ENCODE measurements at regions of chr1 and their contacts with region 1.

Region 1: DNA sequence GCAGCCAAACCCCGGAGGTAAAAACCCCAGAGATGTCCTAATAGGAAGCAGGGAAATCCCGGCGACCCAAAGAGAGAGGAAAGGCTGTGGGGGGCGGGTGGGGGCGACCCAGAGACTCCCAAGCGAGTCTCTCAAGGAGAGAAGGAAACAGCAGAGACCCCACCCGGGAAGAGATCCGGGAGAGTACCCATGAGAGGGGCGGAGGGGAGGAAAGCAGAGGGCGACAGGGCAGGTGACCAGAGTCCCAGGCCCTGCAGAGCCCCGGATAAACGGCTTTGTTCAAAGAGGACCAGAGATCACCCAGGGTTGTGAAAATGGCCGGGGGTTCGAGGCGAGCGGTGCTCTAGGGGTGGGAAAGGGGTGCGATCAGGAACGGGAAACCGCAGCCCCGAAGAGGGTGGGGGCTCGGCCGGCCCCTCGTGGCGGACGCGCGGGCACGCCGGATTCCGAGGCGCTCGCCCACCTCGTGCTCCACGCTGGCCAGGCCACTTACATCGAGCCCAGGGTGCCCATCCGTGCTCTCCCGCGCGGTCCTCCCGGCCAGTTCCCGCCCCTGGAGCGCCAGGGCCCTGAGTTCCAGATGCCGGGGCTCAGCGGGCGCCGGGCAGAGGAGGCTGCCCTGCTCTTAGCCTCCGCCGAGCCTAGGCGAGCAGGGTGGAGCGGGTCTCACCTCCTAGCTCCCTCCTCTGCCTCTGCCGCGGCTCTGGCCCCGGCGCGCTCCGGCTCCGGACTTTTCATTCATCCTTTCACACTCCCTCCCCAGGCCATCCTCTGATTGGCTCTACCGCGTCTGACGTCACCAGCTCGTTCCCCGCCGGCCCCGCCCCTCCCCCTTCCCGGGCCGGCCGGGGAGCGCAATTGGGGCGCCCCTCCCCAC is 52.3 kb downstream of the RHBG start:
- DNase-seq: peak; percentile 31 to 87 (median 68)
- ATAC-seq: peak; percentile 64
- H3K4me3 ChIP-seq: peak overlapping the region; percentile 66 to 71
- H3K4me3 Mint-ChIP-seq: peak overlapping the region; percentile 93
- H3K27ac ChIP-seq: no peak overlapping the region
- H3K27ac Mint-ChIP-seq: no peak overlapping the region
- H3K4me1 ChIP-seq: peaks cover 27% of the 10 kb centered on the region
- H3K4me1 Mint-ChIP-seq: peaks cover 24% of the 10 kb centered on the region
- H3K27me3 ChIP-seq: peaks cover 28 to 29% of the 10 kb centered on the region in 2 experiments
- H3K27me3 Mint-ChIP-seq: peaks cover 68% of the 10 kb centered on the region
- CTCF ChIP-seq: no peak

Region 2: GRCh38 chr1:156233426-156234127 is 187.7 kb before region 1 on chr1:
- CTCF ChIA-PET with region 1: no interaction called
- POLR2A ChIA-PET with region 1: no interaction called
- intact Hi-C with region 1: no loop called
- DNase-seq: no peak
- ATAC-seq: no peak
- H3K4me3 ChIP-seq: no peak overlapping the region
- H3K4me3 Mint-ChIP-seq: no peak overlapping the region
- H3K27ac ChIP-seq: no peak overlapping the region
- H3K27ac Mint-ChIP-seq: no peak overlapping the region
- H3K4me1 ChIP-seq: no peaks in the 10 kb centered on the region
- H3K4me1 Mint-ChIP-seq: no peaks in the 10 kb centered on the region
- H3K27me3 ChIP-seq: no peaks in the 10 kb centered on the region
- H3K27me3 Mint-ChIP-seq: no peaks in the 10 kb centered on the region
- CTCF ChIP-seq: no peak

Region 3: GRCh38 chr1:156435545-156436141 is 14.3 kb after region 1 on chr1:
- CTCF ChIA-PET with region 1: interaction called, 14 read pairs
- POLR2A ChIA-PET with region 1: interaction called, 3 read pairs
- intact Hi-C with region 1: loop called (anchors 2 kb)
- DNase-seq: peak in 3 of 9 experiments; percentile 24 to 51 (median 33)
- ATAC-seq: peak; percentile 27
- H3K4me3 ChIP-seq: peak overlapping the region; percentile 31 to 34
- H3K4me3 Mint-ChIP-seq: peak overlapping the region; percentile 82
- H3K27ac ChIP-seq: no peak overlapping the region
- H3K27ac Mint-ChIP-seq: no peak overlapping the region
- H3K4me1 ChIP-seq: peaks cover 33% of the 10 kb centered on the region
- H3K4me1 Mint-ChIP-seq: peaks cover 29% of the 10 kb centered on the region
- H3K27me3 ChIP-seq: peaks cover 62 to 75% of the 10 kb centered on the region in 2 experiments
- H3K27me3 Mint-ChIP-seq: peaks cover 79% of the 10 kb centered on the region
- CTCF ChIP-seq: no peak

Measured in CD8-positive, alpha-beta T cell (primary cell).